HAP-1 (cell line): ENCODE measurements at regions of chr17 and their contacts with region 1.

Region 1: DNA sequence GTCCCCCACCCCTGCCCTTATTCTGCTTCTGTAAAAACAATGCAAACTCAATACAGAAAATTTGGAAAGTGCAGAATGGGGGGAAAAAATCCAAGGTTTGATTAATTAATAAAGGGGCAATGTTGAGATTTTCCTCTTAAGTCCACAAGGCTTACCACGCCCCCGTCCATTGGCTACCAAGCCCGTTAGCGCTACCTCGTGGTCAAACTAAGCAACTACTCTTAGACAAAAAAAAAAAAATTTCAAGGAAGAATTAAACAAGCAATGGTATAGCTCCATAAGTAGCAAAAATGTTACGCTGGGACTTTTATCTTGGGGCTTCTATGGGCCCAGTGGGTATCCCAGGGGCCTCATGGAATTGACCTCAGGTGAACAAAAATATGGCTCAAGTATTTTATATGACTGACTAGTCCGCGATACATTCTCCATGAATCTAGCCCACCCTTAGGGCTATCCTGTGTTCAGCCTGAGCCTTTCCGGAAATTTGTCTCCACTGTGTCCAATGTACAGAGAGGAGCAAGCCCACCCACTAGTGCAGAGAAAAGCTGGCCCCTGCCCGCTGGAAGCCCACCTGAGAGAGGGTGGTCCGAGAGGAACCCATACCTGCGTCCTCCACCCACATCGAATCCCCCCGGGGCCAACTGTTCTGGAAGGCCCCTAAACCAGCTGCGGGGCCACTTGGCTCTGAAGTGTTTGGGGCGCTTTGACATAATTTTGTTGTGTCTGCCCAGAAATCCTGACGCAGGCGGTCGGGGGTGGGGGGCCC is 19.1 kb upstream of the TEX2 start:
- DNase-seq: peak; percentile 69 to 78
- H3K4me3 ChIP-seq: no peak overlapping the region
- H3K4me1 ChIP-seq: peaks cover 2% of the 10 kb centered on the region; the same call in 1 of the 2 replicates
- H3K27me3 ChIP-seq: no peaks in the 10 kb centered on the region

Region 2: GRCh38 chr17:63919311-63919723 is 362.8 kb before region 1 on chr17:
- in situ Hi-C with region 1: loop called (anchors 25 kb)
- DNase-seq: peak; percentile 29 to 75
- H3K4me3 ChIP-seq: no peak overlapping the region
- H3K4me1 ChIP-seq: no peaks in the 10 kb centered on the region
- H3K27me3 ChIP-seq: no peaks in the 10 kb centered on the region